ENCODE measurements at regions of chr14 and their contacts with region 1.

Region 1: DNA sequence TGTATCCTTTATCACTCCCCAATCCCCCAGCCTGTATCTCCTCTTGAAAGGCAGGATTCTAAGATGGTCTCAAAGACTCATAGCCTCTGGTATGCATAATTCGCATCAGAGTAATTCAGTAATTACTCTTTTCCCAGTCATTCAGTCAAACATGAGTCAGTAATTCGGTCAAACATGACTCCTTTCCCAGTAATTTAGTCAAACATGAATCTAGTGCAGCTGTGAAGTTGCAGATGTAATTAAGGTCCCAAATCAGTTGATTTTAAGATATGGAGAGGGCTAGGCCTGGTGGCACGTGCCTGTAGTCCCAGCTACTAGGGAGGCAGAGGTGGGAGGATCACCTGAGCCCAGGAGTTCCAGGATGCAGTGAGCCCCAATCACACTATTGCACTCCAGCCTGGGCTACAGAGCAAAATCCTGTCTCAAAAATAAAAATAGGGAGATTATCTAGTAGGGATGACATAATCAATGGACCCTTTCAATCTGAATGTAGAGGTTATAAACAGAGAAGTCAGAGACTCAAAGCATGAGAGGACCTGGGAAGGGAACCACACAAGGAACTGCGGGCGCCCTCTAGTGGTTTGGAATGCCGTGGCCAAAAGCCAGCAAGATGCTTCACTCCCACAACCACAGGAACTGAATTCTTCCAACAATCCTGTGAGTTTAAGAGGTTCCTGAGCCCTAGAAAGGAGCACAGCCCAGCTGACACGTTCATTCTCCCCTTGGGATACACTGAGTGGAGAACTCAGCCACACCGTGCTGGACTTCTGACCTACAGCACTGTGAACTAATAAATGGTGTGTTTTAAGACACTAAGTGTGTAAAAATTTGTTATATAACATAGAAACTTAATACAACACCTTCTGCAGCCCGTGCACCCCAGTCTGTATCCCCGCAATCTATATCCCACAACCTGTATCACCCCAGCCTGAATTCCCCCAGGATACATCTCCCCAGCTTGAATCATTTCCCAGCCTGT is 14.3 kb upstream of the ARMH4 start:
- DNase-seq: peak; percentile 85
- ATAC-seq: peak; percentile 55
- H3K4me3 Mint-ChIP-seq: no peak overlapping the region
- H3K27ac Mint-ChIP-seq: no peak overlapping the region
- H3K4me1 Mint-ChIP-seq: peaks cover 6% of the 10 kb centered on the region
- H3K27me3 Mint-ChIP-seq: peaks cover 5% of the 10 kb centered on the region
- CTCF ChIP-seq: peak; percentile 89

Region 2: GRCh38 chr14:58107947-58108552 is 58.2 kb before region 1 on chr14:
- CTCF ChIA-PET with region 1: interaction called, 51 read pairs
- POLR2A ChIA-PET with region 1: no interaction called
- intact Hi-C with region 1: loop called (anchors 5 kb)
- DNase-seq: peak; percentile 60
- ATAC-seq: peak; percentile 49
- H3K4me3 Mint-ChIP-seq: no peak overlapping the region
- H3K27ac Mint-ChIP-seq: no peak overlapping the region
- H3K4me1 Mint-ChIP-seq: no peaks in the 10 kb centered on the region
- H3K27me3 Mint-ChIP-seq: peaks cover 15% of the 10 kb centered on the region
- CTCF ChIP-seq: peak; percentile 84

Region 3: GRCh38 chr14:58177125-58177524 is 10.8 kb after region 1 on chr14:
- CTCF ChIA-PET with region 1: no interaction called
- POLR2A ChIA-PET with region 1: no interaction called
- intact Hi-C with region 1: no loop called
- DNase-seq: no peak
- ATAC-seq: no peak
- H3K4me3 Mint-ChIP-seq: no peak overlapping the region
- H3K27ac Mint-ChIP-seq: no peak overlapping the region
- H3K4me1 Mint-ChIP-seq: no peaks in the 10 kb centered on the region
- H3K27me3 Mint-ChIP-seq: peaks cover 6% of the 10 kb centered on the region
- CTCF ChIP-seq: no peak